ENCODE measurements at regions of chr14 and their contacts with region 1.

Region 1: GRCh38 chr14:103546652-103547454 is 15.6 kb downstream of the BAG5 start:
- DNase-seq: peak in 1 of 2 donors; percentile 60
- ATAC-seq: peak; percentile 23 to 34
- H3K4me3 ChIP-seq: no peak overlapping the region
- H3K27ac ChIP-seq: no peak overlapping the region
- H3K4me1 ChIP-seq: peaks cover 13 to 58% of the 10 kb centered on the region in 2 donors
- H3K27me3 ChIP-seq: no peaks in the 10 kb centered on the region
- CTCF ChIP-seq: peak; percentile 83 to 97 (median 92)
- POLR2A ChIP-seq: no peak

Region 2: GRCh38 chr14:103500148-103500990 is 46.5 kb before region 1 on chr14:
- in situ Hi-C with region 1: no loop called
- intact Hi-C with region 1: loop called (anchors 5 kb)
- DNase-seq: peak; percentile 77 to 85
- ATAC-seq: peak; percentile 84 to 88
- H3K4me3 ChIP-seq: no peak overlapping the region
- H3K27ac ChIP-seq: peak overlapping the region; percentile 38 to 63 (median 50)
- H3K4me1 ChIP-seq: peaks cover 24 to 28% of the 10 kb centered on the region in 2 donors
- H3K27me3 ChIP-seq: no peaks in the 10 kb centered on the region
- CTCF ChIP-seq: peak; percentile 82 to 95 (median 83)
- POLR2A ChIP-seq: no peak

Region 3: DNA sequence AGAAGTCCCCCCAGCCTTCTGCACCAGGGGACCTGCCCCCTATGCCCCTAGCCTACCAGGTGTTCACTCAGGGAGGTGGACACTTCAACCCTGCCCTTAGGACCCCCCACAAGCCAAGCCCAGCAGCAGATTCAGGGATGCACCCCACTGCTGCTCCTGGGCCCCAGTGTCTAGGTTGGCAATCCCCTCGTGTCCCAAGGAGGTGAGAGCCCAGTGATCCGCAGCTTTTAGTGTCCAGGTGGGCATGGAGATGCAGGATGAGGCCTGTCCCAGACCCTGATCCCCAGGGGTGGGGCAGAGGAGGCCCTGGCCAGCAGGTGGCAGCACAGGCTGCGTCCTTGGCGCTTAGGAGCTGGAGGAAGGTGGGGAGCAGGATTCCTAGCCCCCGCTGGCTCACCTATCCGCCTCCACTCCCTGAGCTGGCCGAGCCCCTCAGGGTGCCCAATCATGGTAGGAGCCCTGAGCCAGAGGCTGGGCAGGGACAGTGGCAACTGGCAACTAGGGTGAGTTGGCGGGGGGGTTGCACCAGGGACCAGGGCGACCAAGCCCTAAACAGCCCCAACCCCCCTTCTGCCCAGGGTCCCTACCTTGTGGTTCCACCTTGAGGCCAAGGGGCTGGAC is 28.3 kb before region 1 on chr14:
- in situ Hi-C with region 1: no loop called
- intact Hi-C with region 1: loop called (anchors 1 kb)
- DNase-seq: peak in 1 of 2 donors; percentile 61
- ATAC-seq: peak; percentile 30 to 55
- H3K4me3 ChIP-seq: no peak overlapping the region
- H3K27ac ChIP-seq: peak overlapping the region in 1 of 4 donors; percentile 20
- H3K4me1 ChIP-seq: peaks cover 16 to 23% of the 10 kb centered on the region in 2 donors
- H3K27me3 ChIP-seq: peaks cover 0 to 23% (median 7%) of the 10 kb centered on the region in 3 donors
- CTCF ChIP-seq: peak; percentile 82 to 94 (median 90)
- POLR2A ChIP-seq: no peak

Region 4: DNA sequence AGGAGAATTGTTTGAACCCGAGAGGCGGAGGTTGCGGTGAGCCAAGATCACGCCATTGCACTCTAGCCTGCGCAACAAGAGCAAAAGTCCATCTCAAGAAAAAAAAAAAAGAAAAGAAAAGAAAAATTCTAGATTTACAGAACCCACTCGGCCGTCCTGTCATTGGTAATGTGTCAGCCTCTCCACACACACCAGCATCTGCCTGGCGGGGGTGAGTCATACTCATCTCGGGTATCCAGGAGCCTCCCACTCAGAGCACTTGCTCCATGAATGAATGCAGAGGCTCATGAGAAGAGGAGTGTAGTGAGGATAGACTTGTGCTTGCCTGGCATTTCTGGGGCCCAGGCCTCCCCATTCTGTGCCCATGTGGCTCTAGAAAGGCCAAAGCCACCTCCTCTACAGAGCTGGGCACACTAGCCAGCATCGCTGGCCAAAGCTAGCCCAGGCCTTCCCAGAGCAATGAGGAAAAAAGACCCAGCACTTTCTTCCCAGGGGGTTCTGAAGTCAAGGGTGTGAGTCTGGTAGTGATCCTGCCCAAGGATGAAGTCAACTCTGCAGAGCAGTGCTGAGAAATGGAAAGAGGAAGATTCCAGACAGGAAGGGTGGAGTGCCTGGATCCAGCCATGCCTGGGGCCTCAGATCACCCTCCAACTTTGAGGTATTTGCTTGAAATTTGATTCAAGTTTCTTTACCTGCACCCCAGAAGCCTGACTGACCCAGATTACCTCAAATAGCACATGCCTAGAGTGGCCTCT is 50.9 kb after region 1 on chr14:
- in situ Hi-C with region 1: no loop called
- intact Hi-C with region 1: no loop called
- DNase-seq: peak in 1 of 2 donors; percentile 50
- ATAC-seq: peak; percentile 74 to 85
- H3K4me3 ChIP-seq: no peak overlapping the region
- H3K27ac ChIP-seq: no peak overlapping the region
- H3K4me1 ChIP-seq: peaks cover 0 to 5% of the 10 kb centered on the region in 2 donors
- H3K27me3 ChIP-seq: no peaks in the 10 kb centered on the region
- CTCF ChIP-seq: no peak
- POLR2A ChIP-seq: no peak

Region 5: DNA sequence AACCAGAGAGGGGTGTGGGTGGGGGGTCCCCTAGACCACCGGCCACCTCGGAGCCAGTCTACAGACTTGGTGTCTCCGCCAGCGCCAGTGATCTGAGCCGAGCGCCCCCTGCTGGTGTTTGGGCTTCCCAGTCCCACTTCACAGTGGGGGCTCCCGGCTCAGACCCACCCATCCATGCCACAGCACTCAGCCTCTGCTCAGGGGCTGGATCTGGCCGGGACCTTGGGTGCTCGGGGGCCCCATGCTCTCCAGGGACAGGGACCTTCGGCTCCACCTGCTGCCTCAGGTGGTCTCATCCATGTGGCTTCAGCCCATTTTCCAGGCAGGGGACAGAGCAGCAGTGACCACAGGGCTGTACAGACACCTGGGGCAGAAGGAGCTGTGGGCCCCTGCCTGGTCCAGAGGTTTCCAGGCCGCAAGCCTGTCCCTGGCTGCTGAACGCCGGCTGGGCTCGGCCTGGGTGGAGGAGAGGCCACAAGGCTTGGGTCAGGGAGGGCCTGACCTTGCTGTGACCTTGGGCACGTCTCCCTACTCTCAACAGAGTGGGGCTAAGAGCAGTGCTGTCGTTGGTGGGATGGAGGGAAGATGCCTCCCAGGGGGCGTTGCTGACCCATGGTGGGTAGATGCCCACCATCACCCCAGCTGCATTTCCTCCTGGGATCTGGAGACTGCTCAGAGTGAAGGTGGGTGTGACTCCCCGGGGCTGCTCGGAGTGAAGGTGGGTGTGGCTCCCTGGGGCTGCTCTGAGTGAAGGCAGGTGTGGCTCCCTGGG is 677.8 kb after region 1 on chr14:
- in situ Hi-C with region 1: no loop called
- intact Hi-C with region 1: no loop called
- DNase-seq: no peak
- ATAC-seq: no peak
- H3K4me3 ChIP-seq: no peak overlapping the region
- H3K27ac ChIP-seq: no peak overlapping the region
- H3K4me1 ChIP-seq: no peaks in the 10 kb centered on the region
- H3K27me3 ChIP-seq: peaks cover 18 to 24% (median 18%) of the 10 kb centered on the region in 3 donors
- CTCF ChIP-seq: peak in 4 of 5 experiments; percentile 21 to 39 (median 28)
- POLR2A ChIP-seq: no peak

Measured in gastrocnemius medialis (tissue), 4 donors.